Activated B cell treated with CpG ODN at 0.5 μM for 24 hours (primary cell): ENCODE measurements at regions of chr19 and their contacts with region 1.

Region 1: GRCh38 chr19:9818734-9819589 is at the start of gene FBXL12:
- DNase-seq: peak; percentile 100
- ATAC-seq: peak; percentile 87
- H3K4me3 Mint-ChIP-seq: peak within 1 kb of the TSS; percentile 94
- H3K27ac Mint-ChIP-seq: peak within 1 kb of the TSS; percentile 92
- H3K4me1 Mint-ChIP-seq: peaks cover 24% of the 10 kb centered on the region
- H3K27me3 Mint-ChIP-seq: no peaks in the 10 kb centered on the region
- CTCF ChIP-seq: no peak
- total RNA-seq, gene FBXL12: 34.6 and 41.9 TPM in 2 replicates

Region 2: GRCh38 chr19:9140159-9140874 is 678.6 kb before region 1 on chr19 and contains the start of gene ZNF317:
- CTCF ChIA-PET with region 1: no interaction called
- POLR2A ChIA-PET with region 1: no interaction called
- intact Hi-C with region 1: loop called (anchors 1 kb)
- DNase-seq: peak; percentile 74
- ATAC-seq: peak; percentile 93
- H3K4me3 Mint-ChIP-seq: peak within 1 kb of the TSS; percentile 99
- H3K27ac Mint-ChIP-seq: peak within 1 kb of the TSS; percentile 98
- H3K4me1 Mint-ChIP-seq: peaks cover 42% of the 10 kb centered on the region
- H3K27me3 Mint-ChIP-seq: peaks cover 3% of the 10 kb centered on the region
- CTCF ChIP-seq: no peak
- total RNA-seq, gene ZNF317: 64.4 and 65.8 TPM in 2 replicates

Region 3: DNA sequence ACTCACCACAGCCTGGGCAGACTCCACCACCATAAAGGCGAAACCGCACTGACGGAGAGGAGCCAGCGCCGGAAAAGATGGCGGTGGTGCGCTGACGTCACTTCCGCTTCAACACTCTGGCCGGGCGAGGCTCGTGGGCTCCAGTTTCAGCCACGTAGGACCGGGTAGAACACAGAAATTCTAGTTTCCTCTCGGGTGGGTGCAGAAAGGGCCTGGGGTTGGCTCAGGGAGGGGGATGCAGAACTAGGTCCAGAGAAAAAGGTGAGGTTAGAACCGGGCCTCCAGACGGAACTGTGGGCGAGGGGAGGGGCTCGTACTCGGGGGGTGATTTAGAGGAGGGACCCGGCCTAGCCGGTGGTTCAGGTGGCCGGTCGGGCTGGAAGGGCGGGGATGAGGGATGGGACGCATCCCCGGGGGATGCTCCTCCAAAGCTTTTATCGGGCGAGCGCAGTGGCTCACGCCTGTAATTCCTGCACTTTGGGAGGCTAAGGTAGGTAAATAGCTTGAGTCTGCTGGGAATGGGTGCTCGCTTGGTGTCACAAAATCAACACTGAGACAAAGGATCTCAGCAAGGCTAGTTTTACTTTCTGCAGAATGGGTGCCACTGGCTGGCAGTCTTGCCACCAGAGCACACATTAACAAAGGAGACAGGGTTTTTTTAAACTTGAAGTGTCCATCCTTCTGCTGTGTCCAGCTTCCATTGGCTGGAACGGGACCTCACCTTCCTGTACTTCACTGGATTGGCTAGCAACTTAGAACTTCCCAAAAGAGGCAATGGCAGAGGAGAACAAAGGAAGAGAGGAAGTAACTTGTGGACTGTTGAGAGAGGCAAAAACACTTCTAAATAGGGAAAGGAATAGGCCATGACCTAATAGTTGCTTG is 197.6 kb before region 1 on chr19 and contains the start of gene ZNF561:
- CTCF ChIA-PET with region 1: no interaction called
- POLR2A ChIA-PET with region 1: interaction called, 5 read pairs
- intact Hi-C with region 1: loop called (anchors 1 kb)
- DNase-seq: peak; percentile 81
- ATAC-seq: peak; percentile 88
- H3K4me3 Mint-ChIP-seq: peak within 1 kb of the TSS; percentile 96
- H3K27ac Mint-ChIP-seq: peak within 1 kb of the TSS; percentile 98
- H3K4me1 Mint-ChIP-seq: peaks cover 20% of the 10 kb centered on the region
- H3K27me3 Mint-ChIP-seq: peaks cover 3% of the 10 kb centered on the region
- CTCF ChIP-seq: no peak
- total RNA-seq, gene ZNF561: 37.1 and 40.2 TPM in 2 replicates

Region 4: GRCh38 chr19:9785367-9786331 is 33.3 kb before region 1 on chr19:
- CTCF ChIA-PET with region 1: no interaction called
- POLR2A ChIA-PET with region 1: interaction called, 6 read pairs
- intact Hi-C with region 1: loop called (anchors 1 kb)
- DNase-seq: peak; percentile 86
- ATAC-seq: peak; percentile 84
- H3K4me3 Mint-ChIP-seq: peak overlapping the region; percentile 91
- H3K27ac Mint-ChIP-seq: peak overlapping the region; percentile 96
- H3K4me1 Mint-ChIP-seq: peaks cover 15% of the 10 kb centered on the region
- H3K27me3 Mint-ChIP-seq: no peaks in the 10 kb centered on the region
- CTCF ChIP-seq: no peak

Region 5: GRCh38 chr19:10870955-10871603 is 1052.1 kb after region 1 on chr19 and contains the start of gene CARM1:
- CTCF ChIA-PET with region 1: no interaction called
- POLR2A ChIA-PET with region 1: no interaction called
- intact Hi-C with region 1: loop called (anchors 2 kb)
- DNase-seq: peak; percentile 100
- ATAC-seq: peak; percentile 84
- H3K4me3 Mint-ChIP-seq: peak within 1 kb of the TSS; percentile 83
- H3K27ac Mint-ChIP-seq: peak within 1 kb of the TSS; percentile 88
- H3K4me1 Mint-ChIP-seq: peaks cover 44% of the 10 kb centered on the region
- H3K27me3 Mint-ChIP-seq: no peaks in the 10 kb centered on the region
- CTCF ChIP-seq: no peak
- total RNA-seq, gene CARM1: 32.3 and 39.1 TPM in 2 replicates